K562 (cell line): ENCODE measurements at regions of chr6 and their contacts with region 1.

Region 1: GRCh38 chr6:149565527-149566409 is at the start of gene GINM1:
- DNase-seq: peak; percentile 98 to 99 (median 99)
- ATAC-seq: peak; percentile 94
- H3K4me3 ChIP-seq: peak within 1 kb of the TSS; percentile 99
- H3K27ac ChIP-seq: peak within 1 kb of the TSS; percentile 86
- H3K4me1 ChIP-seq: peaks cover 6 to 17% of the 10 kb centered on the region in 2 experiments; a peak in 4 of 5 replicates
- H3K27me3 ChIP-seq: no peaks in the 10 kb centered on the region
- CTCF ChIP-seq: peak; percentile 88 to 92 (median 90)
- EP300 ChIP-seq: no peak
- POLR2A ChIP-seq: no peak
- RAD21 ChIP-seq: peak; percentile 65 to 74
- polyA plus RNA-seq, gene GINM1: 5.0 to 6.1 TPM

Region 2: DNA sequence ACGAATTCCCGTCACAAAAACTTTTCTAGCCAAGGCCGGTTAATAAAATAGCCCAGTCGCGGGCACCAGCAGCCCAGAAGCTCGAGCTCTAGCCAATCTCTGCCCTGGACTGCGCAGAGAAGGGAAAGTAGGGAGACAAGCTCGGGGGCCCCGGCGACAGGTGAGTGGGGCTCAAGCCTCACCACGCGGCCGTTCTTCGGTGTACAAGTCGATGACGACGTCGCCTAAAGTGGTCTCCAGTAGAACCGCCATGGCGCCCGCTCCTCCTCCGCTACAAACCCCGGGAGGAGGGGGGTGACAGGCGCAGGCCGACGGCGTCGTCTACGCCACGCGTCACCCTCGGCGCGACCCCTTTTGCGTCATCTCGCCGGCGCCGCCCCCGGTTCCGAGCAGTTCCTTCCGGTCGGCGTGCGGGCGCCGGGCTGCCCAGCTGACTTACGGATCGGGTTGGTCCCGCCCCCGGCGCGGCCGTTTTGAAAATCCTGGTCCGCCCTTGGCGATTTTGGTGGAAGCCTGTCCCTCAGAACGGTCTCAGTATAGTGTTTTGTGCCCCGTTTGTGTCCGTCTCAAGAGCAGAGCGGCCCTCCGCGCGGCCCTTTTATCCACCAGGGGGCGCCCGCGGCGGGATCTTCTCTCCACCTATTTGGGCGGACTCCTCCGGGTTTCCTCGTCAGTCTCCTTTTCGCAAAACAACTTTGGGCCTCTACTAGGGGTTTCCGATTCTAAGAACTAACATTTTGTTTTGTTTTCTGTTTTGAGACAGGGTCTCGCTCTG is 19.8 kb before region 1 on chr6 and contains the start of gene PPIL4:
- CTCF ChIA-PET with region 1: no interaction called
- POLR2A ChIA-PET with region 1: interaction called, 34 read pairs
- in situ Hi-C with region 1: no loop called
- intact Hi-C with region 1: no loop called
- DNase-seq: peak; percentile 95 to 98 (median 96)
- ATAC-seq: peak; percentile 90
- H3K4me3 ChIP-seq: peak within 1 kb of the TSS; percentile 97
- H3K27ac ChIP-seq: peak within 1 kb of the TSS; percentile 94
- H3K4me1 ChIP-seq: peaks cover 13 to 14% of the 10 kb centered on the region in 2 experiments; a peak in 4 of 5 replicates
- H3K27me3 ChIP-seq: no peaks in the 10 kb centered on the region
- CTCF ChIP-seq: peak; percentile 71 to 99 (median 84)
- EP300 ChIP-seq: peak; percentile 19; the same call in 1 of the 2 replicates
- POLR2A ChIP-seq: peak; percentile 90
- RAD21 ChIP-seq: peak; percentile 60 to 64
- polyA plus RNA-seq, gene PPIL4: 48.5 to 55.2 TPM

Region 3: GRCh38 chr6:149580880-149581279 is 15.1 kb after region 1 on chr6:
- CTCF ChIA-PET with region 1: no interaction called
- POLR2A ChIA-PET with region 1: interaction called, 10 read pairs
- in situ Hi-C with region 1: no loop called
- intact Hi-C with region 1: no loop called
- DNase-seq: no peak
- ATAC-seq: no peak
- H3K4me3 ChIP-seq: no peak overlapping the region
- H3K27ac ChIP-seq: no peak overlapping the region
- H3K4me1 ChIP-seq: no peaks in the 10 kb centered on the region
- H3K27me3 ChIP-seq: no peaks in the 10 kb centered on the region
- CTCF ChIP-seq: no peak
- EP300 ChIP-seq: no peak
- POLR2A ChIP-seq: no peak
- RAD21 ChIP-seq: no peak

Region 4: GRCh38 chr6:149717588-149718458 is 152.1 kb after region 1 on chr6 and contains the start of gene LATS1:
- CTCF ChIA-PET with region 1: no interaction called
- POLR2A ChIA-PET with region 1: interaction called, 3 read pairs
- in situ Hi-C with region 1: no loop called
- intact Hi-C with region 1: loop called (anchors 5 kb)
- DNase-seq: peak; percentile 86 to 93 (median 88)
- ATAC-seq: peak; percentile 94
- H3K4me3 ChIP-seq: peak within 1 kb of the TSS; percentile 98
- H3K27ac ChIP-seq: peak within 1 kb of the TSS; percentile 98
- H3K4me1 ChIP-seq: peaks cover 5 to 17% of the 10 kb centered on the region in 2 experiments; a peak in 4 of 5 replicates
- H3K27me3 ChIP-seq: no peaks in the 10 kb centered on the region
- CTCF ChIP-seq: no peak
- EP300 ChIP-seq: no peak; the same call in 1 of the 2 replicates
- POLR2A ChIP-seq: peak; percentile 96
- RAD21 ChIP-seq: no peak
- polyA plus RNA-seq, gene LATS1: 5.0 to 5.6 TPM

Region 5: DNA sequence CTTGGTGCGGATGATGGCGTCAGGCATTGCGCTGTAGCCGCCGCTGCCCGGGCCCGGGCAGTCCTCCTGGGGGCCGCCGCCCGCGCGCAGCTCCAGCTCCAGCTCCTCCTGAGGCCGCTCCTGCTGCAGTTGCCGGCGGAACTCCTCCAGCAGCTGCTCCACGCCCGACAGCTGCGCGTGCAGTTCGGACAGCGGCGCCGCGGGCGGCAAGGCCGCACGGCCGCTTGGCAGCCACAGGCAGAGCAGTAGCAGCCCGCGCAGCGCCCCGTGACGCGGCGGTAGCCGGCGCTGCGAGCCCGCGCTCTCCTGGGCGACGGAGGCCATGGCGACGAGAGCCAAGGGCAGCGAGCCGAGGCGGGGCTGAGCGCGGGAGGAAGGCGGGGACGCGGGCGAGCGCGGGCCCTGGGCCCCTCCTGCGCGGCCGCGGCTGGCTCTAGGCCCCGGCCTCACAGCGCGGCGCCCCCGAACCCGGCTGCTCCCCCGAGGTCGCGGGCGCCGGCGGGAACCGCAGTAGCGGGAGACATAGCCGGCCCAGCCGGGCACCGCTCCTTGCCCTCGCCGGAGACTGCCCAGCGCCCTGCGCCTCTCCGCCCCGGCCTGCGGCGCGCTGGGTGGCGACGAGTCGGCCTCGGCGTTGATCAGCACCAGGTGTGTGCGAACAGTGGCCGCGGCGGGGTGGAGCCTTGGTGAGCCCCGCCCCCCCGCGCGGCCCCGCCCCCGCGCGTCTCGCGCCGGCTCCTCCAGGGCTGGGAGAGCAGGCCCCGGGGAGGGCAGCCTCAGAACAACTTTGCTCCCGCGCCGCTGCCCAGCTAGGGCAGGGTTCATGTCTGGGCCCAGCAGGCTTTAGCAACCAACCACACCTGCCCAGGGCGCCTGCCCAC is 298.2 kb after region 1 on chr6 and contains the start of gene LRP11:
- CTCF ChIA-PET with region 1: no interaction called
- POLR2A ChIA-PET with region 1: no interaction called
- in situ Hi-C with region 1: no loop called
- intact Hi-C with region 1: loop called (anchors 10 kb)
- DNase-seq: peak; percentile 86 to 98 (median 97)
- ATAC-seq: peak; percentile 91
- H3K4me3 ChIP-seq: peak within 1 kb of the TSS; percentile 59
- H3K27ac ChIP-seq: 0 out of 3 replicates have a peak within 1 kb of the TSS, but pooled peaks have one; percentile 22
- H3K4me1 ChIP-seq: peaks cover 37 to 45% of the 10 kb centered on the region in 2 experiments; a peak in 4 of 5 replicates
- H3K27me3 ChIP-seq: peaks cover 0 to 13% of the 10 kb centered on the region in 2 experiments; a peak in 3 of 5 replicates
- CTCF ChIP-seq: no peak
- EP300 ChIP-seq: no peak
- POLR2A ChIP-seq: peak; percentile 36; the same call in 1 of the 2 replicates
- RAD21 ChIP-seq: no peak
- polyA plus RNA-seq, gene LRP11: 0.51 to 0.94 TPM

Region 6: DNA sequence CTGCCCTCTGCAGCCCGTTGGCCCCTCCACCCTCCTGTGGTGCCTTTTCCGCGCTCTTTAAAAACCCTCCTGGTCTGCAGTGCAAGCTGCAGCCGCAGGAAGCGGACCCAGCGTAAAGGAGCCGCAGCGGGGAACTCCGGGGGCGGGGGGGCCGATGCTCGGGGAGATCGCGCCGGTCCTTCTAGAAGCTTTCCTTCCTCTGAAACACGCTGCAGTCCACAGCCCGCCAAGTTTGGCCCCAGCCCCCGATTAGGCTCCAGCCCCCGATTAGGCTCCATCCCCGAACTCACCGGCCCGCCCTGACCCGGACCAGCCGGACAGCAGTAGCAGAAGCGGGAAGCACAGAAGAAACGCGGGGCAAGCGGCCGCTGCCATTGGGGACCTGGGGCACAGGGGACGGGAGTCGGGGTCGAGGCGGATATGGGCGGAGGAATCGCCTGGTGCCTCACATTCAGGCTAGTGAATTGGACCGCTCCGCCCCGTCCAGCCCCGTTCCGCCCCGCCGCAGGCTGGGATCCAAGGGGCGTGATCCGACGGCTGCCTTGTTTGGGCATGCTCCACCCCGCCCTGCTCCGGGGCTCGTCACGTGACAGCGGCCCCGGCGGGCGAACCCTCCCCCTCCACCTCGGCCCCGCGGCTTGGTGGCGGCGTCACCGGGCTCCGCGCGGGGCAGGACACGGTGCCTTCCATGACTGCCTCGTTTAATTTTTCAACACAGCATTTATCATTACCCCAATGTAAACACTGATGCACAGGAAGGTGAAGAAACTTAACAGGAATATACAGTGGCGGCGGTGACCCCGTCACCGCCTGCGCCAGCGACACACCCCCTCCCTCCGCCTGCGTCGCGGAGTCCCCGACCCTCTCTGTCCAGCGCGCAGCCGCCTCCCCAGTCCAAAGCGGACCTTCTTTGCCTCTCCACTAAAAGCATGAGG is 439.3 kb after region 1 on chr6:
- CTCF ChIA-PET with region 1: no interaction called
- POLR2A ChIA-PET with region 1: no interaction called
- in situ Hi-C with region 1: no loop called
- intact Hi-C with region 1: loop called (anchors 10 kb)
- DNase-seq: peak; percentile 97 to 99 (median 99)
- ATAC-seq: peak; percentile 97
- H3K4me3 ChIP-seq: peak overlapping the region; percentile 52
- H3K27ac ChIP-seq: peak overlapping the region; percentile 40
- H3K4me1 ChIP-seq: peaks cover 10 to 32% of the 10 kb centered on the region in 2 experiments
- H3K27me3 ChIP-seq: peaks cover 0 to 14% of the 10 kb centered on the region in 2 experiments; a peak in 2 of 5 replicates
- CTCF ChIP-seq: no peak
- EP300 ChIP-seq: no peak
- POLR2A ChIP-seq: peak; percentile 71
- RAD21 ChIP-seq: no peak